ENCODE measurements at regions of chr16 and their contacts with region 1.

Region 1: GRCh38 chr16:49491771-49492761 is 118.5 kb downstream of the C16orf78 start:
- DNase-seq: peak; percentile 68
- ATAC-seq: peak; percentile 78 to 87

Region 2: GRCh38 chr16:49592546-49593423 is 100.7 kb after region 1 on chr16:
- intact Hi-C with region 1: loop called (anchors 5 to 10 kb)
- DNase-seq: no peak
- ATAC-seq: peak in 1 of 2 donors; percentile 51

Region 3: DNA sequence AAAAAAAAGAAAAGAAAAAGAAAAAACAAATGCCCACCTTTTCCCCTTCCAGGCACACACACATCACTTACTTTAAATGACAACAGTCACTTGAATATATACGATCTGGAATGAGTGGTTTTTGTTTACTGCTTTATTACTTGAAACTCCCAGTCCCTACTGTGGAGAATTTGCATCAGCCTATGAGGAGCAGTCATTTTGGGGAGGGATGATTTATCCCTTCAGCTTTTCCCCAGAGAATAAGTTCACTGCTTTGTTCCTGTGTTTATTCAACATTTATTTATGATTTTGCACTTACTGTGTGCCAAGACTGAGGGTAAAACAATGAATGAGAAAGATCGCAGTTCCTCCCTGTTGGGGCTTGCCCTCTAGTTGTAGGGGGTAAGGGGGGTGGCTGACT is 368.5 kb after region 1 on chr16:
- intact Hi-C with region 1: loop called in 1 of 2 experiments (anchors 5 kb)
- DNase-seq: no peak
- ATAC-seq: no peak